ENCODE measurements at regions of chr1 and their contacts with region 1.

Region 1: GRCh38 chr1:156601122-156601830 is at the start of gene GPATCH4:
- DNase-seq: no peak
- ATAC-seq: peak; percentile 88
- H3K4me3 ChIP-seq: peak within 1 kb of the TSS; percentile 76 to 99
- H3K27ac ChIP-seq: peak within 1 kb of the TSS; percentile 99
- H3K4me1 ChIP-seq: peaks cover 5% of the 10 kb centered on the region
- H3K27me3 ChIP-seq: no peaks in the 10 kb centered on the region
- CTCF ChIP-seq: no peak
- total RNA-seq, gene GPATCH4: 44.4 TPM

Region 2: DNA sequence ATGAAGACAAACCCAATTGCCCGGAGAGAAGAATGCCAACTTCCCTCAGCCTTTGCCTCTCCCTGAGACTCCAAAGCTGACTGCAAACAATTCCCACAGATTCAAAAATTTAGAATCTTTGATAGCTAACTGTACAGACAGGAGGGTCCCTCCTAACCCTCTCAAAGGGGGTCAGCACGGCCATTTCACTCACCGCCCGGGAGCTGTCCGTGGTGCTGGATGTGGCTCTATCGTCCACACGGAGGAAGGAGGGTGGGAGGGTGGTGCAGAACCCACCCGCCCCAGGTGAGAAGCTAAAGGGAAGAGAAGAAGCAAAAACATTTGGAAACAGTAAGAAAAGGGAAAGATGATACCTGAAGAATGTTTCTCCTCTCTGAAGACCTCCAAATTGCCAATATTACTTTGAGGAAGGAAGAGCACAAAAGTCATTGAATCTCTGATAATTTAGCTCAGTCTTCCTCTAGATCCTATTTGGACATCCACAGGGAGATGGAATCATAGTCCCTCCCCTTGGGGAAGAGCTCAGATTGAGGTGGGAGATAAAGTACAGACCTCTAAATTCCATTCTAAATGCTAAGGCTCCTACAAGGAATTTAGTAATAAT is 186.7 kb before region 1 on chr1:
- CTCF ChIA-PET with region 1: no interaction called
- POLR2A ChIA-PET with region 1: no interaction called
- in situ Hi-C with region 1: no loop called
- intact Hi-C with region 1: no loop called
- DNase-seq: no peak
- ATAC-seq: no peak
- H3K4me3 ChIP-seq: no peak overlapping the region
- H3K27ac ChIP-seq: no peak overlapping the region
- H3K4me1 ChIP-seq: no peaks in the 10 kb centered on the region
- H3K27me3 ChIP-seq: no peaks in the 10 kb centered on the region; the same call in none of the 2 replicates
- CTCF ChIP-seq: no peak

Region 3: DNA sequence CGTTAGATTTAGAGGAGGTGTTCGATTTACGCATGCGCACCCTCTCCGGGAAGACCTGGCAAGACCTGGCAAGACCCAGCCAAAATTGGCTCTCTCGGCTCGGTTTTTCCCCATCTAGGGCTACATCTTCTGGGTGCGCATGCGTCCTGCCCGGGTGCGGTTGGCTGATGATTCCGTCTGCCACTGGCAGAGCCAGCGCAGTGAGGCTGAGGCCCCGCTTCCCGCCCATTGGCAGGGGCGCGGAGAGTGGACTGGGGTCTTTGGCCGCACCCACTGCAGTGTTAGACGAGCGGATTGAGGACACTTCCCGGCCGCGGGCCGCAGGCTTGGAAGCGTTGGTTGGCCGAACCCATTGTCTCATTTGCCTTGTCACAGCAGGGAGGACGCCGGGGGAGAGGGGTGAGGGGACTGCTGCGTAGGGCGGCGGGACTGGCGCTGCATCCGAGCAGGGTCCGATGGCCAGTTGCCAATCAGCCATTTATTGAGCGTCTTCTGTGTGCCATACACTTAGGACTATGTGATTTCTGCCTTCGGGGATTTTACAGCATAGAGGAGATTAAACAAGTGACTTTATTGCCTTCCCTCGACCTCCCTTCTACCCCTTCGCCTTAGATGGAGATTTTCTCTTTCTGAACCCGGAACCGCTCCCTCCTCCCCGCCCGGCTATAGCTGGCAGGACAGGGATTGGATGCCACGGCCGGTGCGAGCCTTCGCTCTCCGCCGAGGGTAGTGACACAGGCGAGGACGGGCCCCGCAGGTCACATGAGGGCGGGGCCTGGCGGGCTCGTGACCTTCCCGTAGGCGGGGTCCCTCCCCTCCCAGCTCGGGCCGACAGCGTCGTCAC is 144.4 kb before region 1 on chr1:
- CTCF ChIA-PET with region 1: no interaction called
- POLR2A ChIA-PET with region 1: no interaction called
- in situ Hi-C with region 1: no loop called
- intact Hi-C with region 1: loop called (anchors 10 kb)
- DNase-seq: peak; percentile 95
- ATAC-seq: peak; percentile 93
- H3K4me3 ChIP-seq: peak overlapping the region; percentile 70 to 83
- H3K27ac ChIP-seq: peak overlapping the region; percentile 98
- H3K4me1 ChIP-seq: peaks cover 7% of the 10 kb centered on the region; the same call in 1 of the 2 replicates
- H3K27me3 ChIP-seq: no peaks in the 10 kb centered on the region
- CTCF ChIP-seq: no peak; the same call in none of the 2 replicates

Region 4: DNA sequence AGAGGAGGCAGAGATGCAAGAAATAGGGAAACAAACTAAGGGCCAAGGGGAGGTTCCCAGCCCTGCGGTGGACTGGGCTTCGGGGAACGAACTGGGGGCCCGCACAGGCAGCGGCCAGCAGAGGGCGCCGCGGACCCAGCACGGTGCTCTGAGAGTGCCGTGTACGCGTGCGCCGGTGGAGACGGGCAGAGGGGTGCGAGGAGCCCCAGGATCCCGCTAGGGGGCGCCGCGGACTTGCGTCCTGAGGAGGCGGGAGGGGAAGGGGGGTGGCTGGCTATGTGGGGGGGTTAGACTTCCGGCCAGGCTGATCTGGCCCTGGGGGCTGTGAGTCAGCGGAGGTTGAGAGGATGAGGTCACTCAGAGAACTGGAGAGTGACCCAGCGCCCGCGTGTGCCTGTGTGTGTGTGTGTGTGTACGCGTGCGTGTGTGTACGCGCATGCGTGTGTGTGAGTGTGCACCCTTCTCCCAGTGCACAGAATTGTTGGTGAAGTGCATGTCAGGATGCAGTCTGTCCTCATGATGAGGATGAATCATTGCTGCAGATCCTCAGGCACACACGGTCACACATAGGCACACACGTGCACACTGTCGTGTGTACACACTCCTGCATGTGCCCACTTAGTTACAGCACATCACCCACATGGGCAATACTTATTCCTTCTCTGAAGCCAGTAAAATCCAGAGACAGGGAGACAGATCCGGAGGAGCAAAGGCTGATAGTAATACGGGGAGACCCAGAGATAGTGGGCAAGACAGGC is 58.9 kb after region 1 on chr1:
- CTCF ChIA-PET with region 1: no interaction called
- POLR2A ChIA-PET with region 1: interaction called, 13 read pairs
- in situ Hi-C with region 1: no loop called
- intact Hi-C with region 1: no loop called
- DNase-seq: peak; percentile 95
- ATAC-seq: peak; percentile 79
- H3K4me3 ChIP-seq: peak overlapping the region; percentile 23 to 69
- H3K27ac ChIP-seq: peak overlapping the region; percentile 98
- H3K4me1 ChIP-seq: peaks cover 61% of the 10 kb centered on the region
- H3K27me3 ChIP-seq: no peaks in the 10 kb centered on the region
- CTCF ChIP-seq: peak; percentile 100

Region 5: GRCh38 chr1:157233131-157233530 is 631.9 kb after region 1 on chr1:
- CTCF ChIA-PET with region 1: no interaction called
- POLR2A ChIA-PET with region 1: no interaction called
- in situ Hi-C with region 1: no loop called
- intact Hi-C with region 1: no loop called
- DNase-seq: no peak
- ATAC-seq: no peak
- H3K4me3 ChIP-seq: no peak overlapping the region
- H3K27ac ChIP-seq: no peak overlapping the region
- H3K4me1 ChIP-seq: no peaks in the 10 kb centered on the region
- H3K27me3 ChIP-seq: peaks cover 2% of the 10 kb centered on the region; the same call in 1 of the 2 replicates
- CTCF ChIP-seq: no peak